Caco-2 (cell line): ENCODE measurements at regions of chr12 and their contacts with region 1.

Region 1: DNA sequence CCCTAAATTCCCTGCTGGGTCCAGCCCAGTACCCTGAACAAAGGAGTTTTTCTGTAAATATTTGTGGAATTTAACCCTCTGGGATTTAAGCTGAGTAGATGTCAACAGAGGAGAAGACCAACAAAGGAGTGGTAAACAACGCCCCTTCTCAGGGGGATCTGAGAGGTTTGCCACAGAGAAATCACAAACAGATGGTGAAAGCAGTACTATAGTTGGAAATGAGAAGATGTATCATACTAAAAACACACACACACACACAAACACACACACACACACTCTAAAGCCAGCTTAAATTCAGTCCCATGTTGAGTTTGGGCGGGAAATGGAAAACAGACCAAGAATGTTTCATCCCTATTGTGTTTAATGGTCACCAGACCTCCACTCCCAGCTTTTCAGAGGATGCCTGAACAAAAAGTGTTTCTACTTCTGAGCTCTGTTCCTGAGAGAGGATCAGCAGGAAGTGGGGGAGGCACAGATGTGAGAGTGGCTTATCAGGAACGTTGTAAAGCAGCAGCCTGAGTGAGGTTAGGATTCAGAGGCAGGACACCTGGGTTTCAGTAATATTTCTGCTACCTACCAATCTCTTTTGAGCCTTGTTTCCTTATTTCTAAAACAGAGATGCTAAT is 3.2 kb downstream of the BIN2 start:
- DNase-seq: peak; percentile 53 to 60
- H3K4me3 ChIP-seq: no peak overlapping the region
- H3K4me3 Mint-ChIP-seq: peak overlapping the region; percentile 34
- H3K27ac Mint-ChIP-seq: peak overlapping the region; percentile 81
- H3K4me1 ChIP-seq: peaks cover 59% of the 10 kb centered on the region
- H3K4me1 Mint-ChIP-seq: peaks cover 62% of the 10 kb centered on the region
- H3K27me3 ChIP-seq: no peaks in the 10 kb centered on the region
- H3K27me3 Mint-ChIP-seq: no peaks in the 10 kb centered on the region
- CTCF ChIP-seq: no peak

Region 2: GRCh38 chr12:51229116-51229809 is 91.5 kb before region 1 on chr12:
- CTCF ChIA-PET with region 1: no interaction called
- POLR2A ChIA-PET with region 1: no interaction called
- intact Hi-C with region 1: no loop called
- DNase-seq: no peak
- H3K4me3 ChIP-seq: no peak overlapping the region
- H3K4me3 Mint-ChIP-seq: no peak overlapping the region
- H3K27ac Mint-ChIP-seq: no peak overlapping the region
- H3K4me1 ChIP-seq: no peaks in the 10 kb centered on the region
- H3K4me1 Mint-ChIP-seq: no peaks in the 10 kb centered on the region
- H3K27me3 ChIP-seq: no peaks in the 10 kb centered on the region
- H3K27me3 Mint-ChIP-seq: no peaks in the 10 kb centered on the region
- CTCF ChIP-seq: no peak

Region 3: DNA sequence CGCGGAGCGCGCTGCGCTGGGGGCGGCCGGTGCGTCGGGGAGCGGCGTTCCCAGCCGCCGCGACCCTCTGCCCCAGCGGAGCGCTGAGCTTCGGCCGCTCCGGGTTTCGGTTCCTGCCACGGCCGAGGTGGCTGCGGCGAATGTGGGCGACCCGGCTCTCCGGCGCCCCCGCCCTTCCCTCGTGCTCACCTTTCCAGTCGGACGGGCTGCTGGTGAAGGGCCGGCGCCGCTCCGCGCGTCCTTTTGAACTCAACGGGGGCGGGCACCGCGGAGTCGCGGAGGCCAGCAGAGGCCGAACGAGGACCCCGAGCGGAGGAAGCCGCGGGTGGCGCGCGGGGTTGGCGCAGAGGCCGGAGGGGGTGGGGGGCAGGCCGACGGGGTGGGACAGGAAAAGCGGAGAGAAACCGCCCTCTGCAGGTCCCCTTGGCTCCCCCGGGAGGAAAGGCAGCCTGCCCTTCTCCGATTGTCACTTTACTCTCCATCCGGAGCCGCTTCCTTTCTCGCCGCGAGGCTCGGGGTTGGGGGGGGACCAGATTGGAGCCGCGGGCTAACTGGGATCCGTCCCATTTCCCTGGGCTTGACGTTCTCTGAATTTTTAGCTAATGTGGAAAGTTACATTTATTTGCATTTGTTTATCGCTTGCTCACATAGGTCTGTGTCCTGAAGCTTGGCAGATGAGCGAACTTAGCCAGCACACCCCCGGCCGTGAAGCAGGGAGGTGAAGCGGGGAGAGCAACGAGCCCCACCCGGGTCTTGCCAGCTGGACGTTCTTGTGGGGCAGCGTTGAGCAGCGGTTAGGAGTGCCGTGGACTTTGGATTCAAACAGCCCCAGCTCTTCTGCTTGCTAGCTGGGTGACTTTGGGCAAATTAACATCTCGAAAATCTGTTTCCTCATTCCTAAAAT is 50.5 kb before region 1 on chr12 and contains the start of gene SMAGP:
- CTCF ChIA-PET with region 1: interaction called, 16 read pairs
- POLR2A ChIA-PET with region 1: interaction called, 12 read pairs
- intact Hi-C with region 1: loop called (anchors 2 kb)
- DNase-seq: peak; percentile 94 to 99
- H3K4me3 ChIP-seq: peak within 1 kb of the TSS; percentile 85
- H3K4me3 Mint-ChIP-seq: peak within 1 kb of the TSS; percentile 87
- H3K27ac Mint-ChIP-seq: peak within 1 kb of the TSS; percentile 99
- H3K4me1 ChIP-seq: peaks cover 21% of the 10 kb centered on the region
- H3K4me1 Mint-ChIP-seq: peaks cover 19% of the 10 kb centered on the region
- H3K27me3 ChIP-seq: no peaks in the 10 kb centered on the region
- H3K27me3 Mint-ChIP-seq: no peaks in the 10 kb centered on the region
- CTCF ChIP-seq: peak; percentile 1 to 12
- total RNA-seq, gene SMAGP: 95.1 and 108 TPM in 2 replicates

Region 4: GRCh38 chr12:51284476-51284875 is 36.3 kb before region 1 on chr12:
- CTCF ChIA-PET with region 1: no interaction called
- POLR2A ChIA-PET with region 1: no interaction called
- intact Hi-C with region 1: no loop called
- DNase-seq: no peak
- H3K4me3 ChIP-seq: no peak overlapping the region
- H3K4me3 Mint-ChIP-seq: no peak overlapping the region
- H3K27ac Mint-ChIP-seq: peak overlapping the region; percentile 35
- H3K4me1 ChIP-seq: no peaks in the 10 kb centered on the region
- H3K4me1 Mint-ChIP-seq: peaks cover 6% of the 10 kb centered on the region
- H3K27me3 ChIP-seq: no peaks in the 10 kb centered on the region
- H3K27me3 Mint-ChIP-seq: no peaks in the 10 kb centered on the region
- CTCF ChIP-seq: no peak

Region 5: DNA sequence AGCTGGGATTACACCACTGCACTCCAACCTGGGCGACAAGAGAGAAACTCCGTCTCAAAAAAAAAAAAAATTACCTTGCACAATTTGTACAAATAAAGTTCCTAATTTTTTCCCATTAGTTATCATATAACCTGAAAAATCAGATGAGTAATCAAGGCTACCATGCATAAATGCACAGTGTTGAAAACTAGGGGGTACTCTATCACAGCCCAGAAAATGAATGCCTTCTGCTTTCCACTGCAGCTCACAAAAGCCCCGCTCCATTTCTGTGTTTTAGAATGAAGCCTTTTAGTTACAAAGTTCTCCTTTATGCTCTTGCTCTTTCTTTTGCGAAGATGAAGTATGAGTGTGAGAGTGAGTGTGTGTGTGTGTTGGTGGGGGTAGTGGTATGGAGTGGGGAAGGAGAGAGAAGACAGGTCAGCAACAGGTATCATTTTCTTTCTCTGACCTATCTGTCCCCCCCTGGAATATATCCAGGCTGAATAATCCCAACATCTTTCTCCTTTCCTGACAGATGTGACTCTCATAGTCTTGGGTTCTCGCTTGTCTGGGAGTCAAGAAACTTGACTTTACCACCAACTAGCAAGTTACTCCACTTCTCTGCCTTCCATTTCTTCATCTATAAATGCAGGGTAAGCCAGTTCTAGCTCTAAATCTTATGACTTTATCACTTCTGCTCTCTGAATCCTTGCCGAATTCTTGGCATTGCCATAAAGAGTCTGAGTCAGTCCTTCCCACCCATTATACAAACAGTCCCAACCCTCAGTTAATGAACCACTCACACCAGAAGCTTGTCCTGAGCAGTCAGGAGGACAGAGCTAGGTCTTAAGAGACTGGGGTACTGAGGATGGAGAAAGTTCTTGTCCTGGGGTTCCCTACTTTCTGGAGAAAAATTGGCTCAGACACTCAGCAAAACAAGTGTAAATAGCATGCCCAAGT is 12.9 kb before region 1 on chr12:
- CTCF ChIA-PET with region 1: interaction called, 4 read pairs
- POLR2A ChIA-PET with region 1: interaction called, 10 read pairs
- intact Hi-C with region 1: no loop called
- DNase-seq: peak; percentile 54 to 64
- H3K4me3 ChIP-seq: no peak overlapping the region
- H3K4me3 Mint-ChIP-seq: peak overlapping the region; percentile 52
- H3K27ac Mint-ChIP-seq: peak overlapping the region; percentile 86
- H3K4me1 ChIP-seq: peaks cover 20% of the 10 kb centered on the region
- H3K4me1 Mint-ChIP-seq: peaks cover 30% of the 10 kb centered on the region
- H3K27me3 ChIP-seq: no peaks in the 10 kb centered on the region
- H3K27me3 Mint-ChIP-seq: no peaks in the 10 kb centered on the region
- CTCF ChIP-seq: no peak